Stomach (tissue), 19 donors: ENCODE measurements at regions of chr1 and their contacts with region 1.

Region 1: GRCh38 chr1:67561704-67562113 is 123.3 kb upstream of the GADD45A start:
- DNase-seq: peak; percentile 94 to 99
- H3K4me3 ChIP-seq: no peak overlapping the region
- H3K27ac ChIP-seq: peak overlapping the region in 4 of 5 donors; percentile 43 to 59 (median 50)
- H3K4me1 ChIP-seq: peaks cover 0 to 36% (median 11%) of the 10 kb centered on the region in 4 donors
- H3K27me3 ChIP-seq: no peaks in the 10 kb centered on the region
- CTCF ChIP-seq: peak in 5 of 7 experiments; percentile 76 to 90 (median 87)
- EP300 ChIP-seq: no peak
- POLR2A ChIP-seq: no peak

Region 2: DNA sequence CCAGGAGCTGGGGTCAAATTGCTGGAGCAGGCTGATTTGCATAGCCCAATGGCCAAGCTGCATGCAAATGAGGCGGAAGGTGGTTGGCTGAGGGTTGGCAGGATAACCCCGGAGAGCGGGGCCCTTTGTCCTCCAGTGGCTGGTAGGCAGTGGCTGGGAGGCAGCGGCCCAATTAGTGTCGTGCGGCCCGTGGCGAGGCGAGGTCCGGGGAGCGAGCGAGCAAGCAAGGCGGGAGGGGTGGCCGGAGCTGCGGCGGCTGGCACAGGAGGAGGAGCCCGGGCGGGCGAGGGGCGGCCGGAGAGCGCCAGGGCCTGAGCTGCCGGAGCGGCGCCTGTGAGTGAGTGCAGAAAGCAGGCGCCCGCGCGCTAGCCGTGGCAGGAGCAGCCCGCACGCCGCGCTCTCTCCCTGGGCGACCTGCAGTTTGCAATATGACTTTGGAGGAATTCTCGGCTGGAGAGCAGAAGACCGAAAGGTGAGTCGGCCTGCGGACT is 123.4 kb after region 1 on chr1 and contains the start of gene GADD45A:
- intact Hi-C with region 1: loop called (anchors 10 kb)
- DNase-seq: peak; percentile 99
- H3K4me3 ChIP-seq: peak within 1 kb of the TSS; percentile 71 to 89 (median 86)
- H3K27ac ChIP-seq: peak within 1 kb of the TSS; percentile 96 to 98 (median 98)
- H3K4me1 ChIP-seq: peaks cover 12 to 54% (median 31%) of the 10 kb centered on the region in 4 donors
- H3K27me3 ChIP-seq: no peaks in the 10 kb centered on the region
- CTCF ChIP-seq: no peak
- EP300 ChIP-seq: peak; percentile 6
- POLR2A ChIP-seq: peak in 2 of 4 donors; percentile 95 to 99
- total RNA-seq, gene GADD45A: 4.7 to 63.8 (median 37.5) TPM

Region 3: DNA sequence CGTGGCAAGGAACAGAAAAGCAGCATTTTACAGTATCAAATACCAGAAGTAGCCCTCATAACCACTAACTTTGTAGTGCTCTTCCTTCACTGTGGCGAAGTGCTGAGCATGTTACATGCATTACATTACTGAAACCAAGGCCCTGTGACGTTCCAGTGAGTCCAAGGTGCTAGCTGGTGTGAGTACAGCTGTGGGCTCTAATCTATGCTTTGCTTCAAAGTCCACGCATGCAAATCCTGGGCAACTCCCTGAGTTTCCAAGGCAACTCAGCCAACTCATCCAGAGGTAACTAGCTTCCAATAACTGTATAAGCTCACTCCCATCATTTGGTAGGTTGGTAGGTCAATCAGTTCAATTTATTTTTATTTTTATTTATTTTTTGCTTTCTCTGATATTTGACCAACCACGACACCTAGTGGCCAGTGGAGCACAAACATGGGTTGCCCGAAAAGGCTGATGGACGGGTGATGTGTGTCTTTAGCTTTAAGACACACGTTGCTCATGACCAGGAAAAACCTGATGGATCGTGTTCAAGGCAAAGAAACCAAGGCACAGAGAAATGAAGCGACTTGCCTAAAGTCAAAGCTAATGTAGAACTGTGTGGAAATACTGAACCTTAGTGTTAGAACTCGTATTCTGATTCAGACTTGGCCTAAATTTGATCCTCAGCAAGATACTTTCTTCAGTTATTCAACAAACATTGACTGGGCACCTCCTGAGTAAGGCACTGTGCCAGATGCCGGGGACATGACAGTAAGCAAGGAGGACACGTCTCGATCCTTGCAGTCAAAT is 198.5 kb after region 1 on chr1:
- intact Hi-C with region 1: loop called (anchors 5 kb)
- DNase-seq: peak; percentile 76 to 94
- H3K4me3 ChIP-seq: no peak overlapping the region
- H3K27ac ChIP-seq: peak overlapping the region; percentile 79 to 83 (median 82)
- H3K4me1 ChIP-seq: peaks cover 14 to 59% (median 36%) of the 10 kb centered on the region in 4 donors
- H3K27me3 ChIP-seq: no peaks in the 10 kb centered on the region
- CTCF ChIP-seq: peak in 5 of 7 experiments; percentile 75 to 90 (median 86)
- EP300 ChIP-seq: no peak
- POLR2A ChIP-seq: no peak

Region 4: DNA sequence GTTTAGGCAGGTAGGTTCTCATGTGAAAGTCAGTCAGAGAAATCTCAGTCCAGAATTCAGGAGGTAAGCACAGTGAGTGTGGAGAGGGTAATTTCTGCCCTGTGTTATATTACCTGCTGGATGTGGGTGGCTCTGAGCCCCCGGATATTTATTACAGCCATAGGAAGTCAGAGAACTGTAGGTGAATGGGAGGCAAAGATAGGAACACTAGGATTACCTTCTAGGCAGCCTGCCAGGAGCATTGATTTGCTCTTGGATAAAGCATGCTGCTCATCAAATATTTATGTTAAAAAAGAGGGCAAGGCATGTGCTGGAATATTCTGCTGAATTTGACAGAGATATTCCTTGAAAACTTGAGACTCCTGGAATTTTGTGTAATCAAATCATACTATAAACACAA is 263.1 kb after region 1 on chr1:
- intact Hi-C with region 1: loop called (anchors 5 kb)
- DNase-seq: no peak
- H3K4me3 ChIP-seq: no peak overlapping the region
- H3K27ac ChIP-seq: no peak overlapping the region
- H3K4me1 ChIP-seq: peaks cover under 1 to 63% (median 34%) of the 10 kb centered on the region in 4 donors
- H3K27me3 ChIP-seq: no peaks in the 10 kb centered on the region
- CTCF ChIP-seq: no peak
- EP300 ChIP-seq: no peak
- POLR2A ChIP-seq: no peak